CD4-positive, alpha-beta memory T cell (primary cell): ENCODE measurements at regions of chr14 and their contacts with region 1.

Region 1: GRCh38 chr14:31026395-31027118 is 378 bp upstream of the STRN3 start:
- DNase-seq: peak; percentile 85 to 91 (median 87)
- H3K4me3 ChIP-seq: peak overlapping the region; percentile 66 to 87
- H3K4me3 Mint-ChIP-seq: peak overlapping the region; percentile 93 to 100 (median 98)
- H3K27ac ChIP-seq: peak overlapping the region; percentile 95
- H3K27ac Mint-ChIP-seq: peak overlapping the region; percentile 96 to 99 (median 99)
- H3K4me1 ChIP-seq: peaks cover 36% of the 10 kb centered on the region
- H3K4me1 Mint-ChIP-seq: peaks cover 39 to 64% (median 48%) of the 10 kb centered on the region in 4 donors
- H3K27me3 ChIP-seq: no peaks in the 10 kb centered on the region
- H3K27me3 Mint-ChIP-seq: no peaks in the 10 kb centered on the region

Region 2: GRCh38 chr14:30621940-30622830 is 404.4 kb before region 1 on chr14 and contains the start of gene SCFD1:
- CTCF ChIA-PET with region 1: no interaction called
- POLR2A ChIA-PET with region 1: interaction called, 13 read pairs
- intact Hi-C with region 1: loop called (anchors 1 kb)
- DNase-seq: peak; percentile 88 to 93 (median 90)
- H3K4me3 ChIP-seq: peak within 1 kb of the TSS; percentile 74 to 97
- H3K4me3 Mint-ChIP-seq: peak within 1 kb of the TSS; percentile 93 to 99 (median 96)
- H3K27ac ChIP-seq: peak within 1 kb of the TSS; percentile 81
- H3K27ac Mint-ChIP-seq: peak within 1 kb of the TSS; percentile 96 to 99 (median 97)
- H3K4me1 ChIP-seq: peaks cover 52% of the 10 kb centered on the region
- H3K4me1 Mint-ChIP-seq: peaks cover 26 to 53% (median 40%) of the 10 kb centered on the region in 4 donors
- H3K27me3 ChIP-seq: no peaks in the 10 kb centered on the region
- H3K27me3 Mint-ChIP-seq: no peaks in the 10 kb centered on the region
- total RNA-seq, gene SCFD1: 58.1 to 72.6 TPM

Region 3: DNA sequence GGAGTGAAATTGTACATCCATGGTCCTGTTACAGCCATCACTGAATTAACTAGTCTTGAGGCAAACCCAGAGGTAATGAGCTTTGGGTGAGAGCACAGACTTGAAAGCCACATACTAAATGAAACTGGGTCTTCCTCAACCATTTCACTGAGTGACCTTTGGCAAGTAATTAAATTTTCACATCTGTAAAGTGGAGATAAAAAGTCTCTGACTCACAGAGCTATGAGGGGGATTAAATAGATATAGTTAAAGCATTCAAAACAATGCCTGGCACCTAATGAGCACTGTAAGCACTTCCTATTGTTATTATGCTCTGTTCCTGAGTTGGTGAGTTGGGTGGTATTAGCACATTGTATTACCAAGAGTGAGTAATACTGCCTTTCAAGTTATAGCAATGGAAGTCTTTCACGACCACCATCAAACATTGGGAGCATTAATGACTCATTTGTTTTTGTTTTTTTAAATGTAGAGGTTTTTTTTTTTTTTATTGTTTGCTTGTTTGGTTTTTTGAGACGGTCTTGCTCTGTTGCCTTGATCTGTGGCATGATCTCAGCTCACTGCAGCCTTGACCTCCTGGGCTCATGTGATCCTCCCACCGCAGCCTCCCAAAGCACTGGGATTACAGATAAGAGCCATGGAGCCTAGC is 12.1 kb after region 1 on chr14:
- CTCF ChIA-PET with region 1: interaction called, 3 read pairs
- POLR2A ChIA-PET with region 1: interaction called, 10 read pairs
- intact Hi-C with region 1: no loop called
- DNase-seq: no peak
- H3K4me3 ChIP-seq: no peak overlapping the region
- H3K4me3 Mint-ChIP-seq: no peak overlapping the region
- H3K27ac ChIP-seq: no peak overlapping the region
- H3K27ac Mint-ChIP-seq: no peak overlapping the region
- H3K4me1 ChIP-seq: no peaks in the 10 kb centered on the region
- H3K4me1 Mint-ChIP-seq: peaks cover 0 to 10% (median 5%) of the 10 kb centered on the region in 4 donors
- H3K27me3 ChIP-seq: no peaks in the 10 kb centered on the region
- H3K27me3 Mint-ChIP-seq: no peaks in the 10 kb centered on the region

Region 4: DNA sequence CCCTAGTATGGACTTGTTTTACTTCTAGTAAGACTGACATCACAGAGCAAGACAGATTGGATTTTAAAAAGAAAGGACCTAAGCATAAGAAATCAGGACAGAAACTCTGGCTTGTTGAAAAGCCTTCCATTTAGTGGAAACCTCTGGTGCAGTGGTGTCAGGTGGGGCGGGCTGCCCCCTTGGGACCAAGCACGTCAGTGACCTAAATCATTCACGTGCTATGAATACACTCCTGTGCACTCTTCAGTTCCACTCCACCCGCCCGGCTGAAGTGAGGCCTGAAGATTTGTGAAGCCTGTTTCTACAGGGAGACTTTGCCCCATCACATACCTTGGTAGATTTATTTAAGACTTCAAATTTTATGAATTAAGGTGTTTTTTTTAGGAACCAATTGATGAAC is 57.8 kb after region 1 on chr14:
- CTCF ChIA-PET with region 1: interaction called, 3 read pairs
- POLR2A ChIA-PET with region 1: interaction called, 3 read pairs
- intact Hi-C with region 1: loop called (anchors 5 kb)
- DNase-seq: no peak
- H3K4me3 ChIP-seq: no peak overlapping the region
- H3K4me3 Mint-ChIP-seq: no peak overlapping the region
- H3K27ac ChIP-seq: no peak overlapping the region
- H3K27ac Mint-ChIP-seq: no peak overlapping the region
- H3K4me1 ChIP-seq: no peaks in the 10 kb centered on the region
- H3K4me1 Mint-ChIP-seq: no peaks in the 10 kb centered on the region
- H3K27me3 ChIP-seq: no peaks in the 10 kb centered on the region
- H3K27me3 Mint-ChIP-seq: no peaks in the 10 kb centered on the region

Region 5: GRCh38 chr14:31127690-31128089 is 101.1 kb after region 1 on chr14:
- CTCF ChIA-PET with region 1: no interaction called
- POLR2A ChIA-PET with region 1: interaction called, 16 read pairs
- intact Hi-C with region 1: loop called (anchors 1 kb)
- DNase-seq: peak; percentile 80 to 91 (median 85)
- H3K4me3 ChIP-seq: no peak overlapping the region
- H3K4me3 Mint-ChIP-seq: peak overlapping the region in 7 of 8 donors; percentile 5 to 80 (median 54)
- H3K27ac ChIP-seq: peak overlapping the region; percentile 63
- H3K27ac Mint-ChIP-seq: peak overlapping the region; percentile 65 to 98 (median 87)
- H3K4me1 ChIP-seq: peaks cover 47% of the 10 kb centered on the region
- H3K4me1 Mint-ChIP-seq: peaks cover 39 to 58% (median 49%) of the 10 kb centered on the region in 4 donors
- H3K27me3 ChIP-seq: no peaks in the 10 kb centered on the region
- H3K27me3 Mint-ChIP-seq: no peaks in the 10 kb centered on the region